OCI-LY7 (cell line): ENCODE measurements at regions of chr10 and their contacts with region 1.

Region 1: DNA sequence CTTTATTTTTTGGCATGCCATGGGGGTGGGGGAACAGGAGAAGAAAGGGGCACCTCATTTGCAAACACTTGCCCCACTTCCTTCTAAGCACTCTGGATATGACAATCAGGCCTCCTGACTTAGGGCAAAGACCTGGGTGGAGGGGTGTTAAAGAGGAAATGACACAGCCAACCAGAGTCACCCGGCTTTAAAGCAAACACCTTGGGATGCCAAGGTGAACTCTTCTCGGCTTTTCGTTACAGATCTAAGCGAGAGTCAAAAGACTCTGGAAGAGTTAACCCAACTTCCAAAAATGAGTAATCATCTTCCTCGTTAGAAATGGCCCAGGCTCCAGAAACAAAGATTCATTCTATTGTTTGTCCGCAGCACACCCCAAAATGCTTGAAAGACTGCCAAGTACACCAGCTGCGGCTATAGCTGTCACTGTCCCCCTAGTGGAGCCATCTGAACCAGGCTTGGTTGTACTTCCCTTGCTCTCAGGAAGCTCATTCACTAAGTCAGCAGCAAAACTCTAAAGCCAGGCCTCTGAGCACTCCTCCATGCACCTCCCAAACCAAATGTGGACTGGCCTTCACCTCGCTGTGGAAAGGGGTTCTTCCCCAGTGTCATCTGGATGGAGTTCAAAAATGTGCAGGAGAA is 24.8 kb downstream of the FAM53B start:
- DNase-seq: peak; percentile 81
- H3K4me3 ChIP-seq: peak overlapping the region; percentile 33
- H3K27ac ChIP-seq: peak overlapping the region; percentile 66
- H3K4me1 ChIP-seq: peaks cover 68% of the 10 kb centered on the region
- CTCF ChIP-seq: peak; percentile 79

Region 2: DNA sequence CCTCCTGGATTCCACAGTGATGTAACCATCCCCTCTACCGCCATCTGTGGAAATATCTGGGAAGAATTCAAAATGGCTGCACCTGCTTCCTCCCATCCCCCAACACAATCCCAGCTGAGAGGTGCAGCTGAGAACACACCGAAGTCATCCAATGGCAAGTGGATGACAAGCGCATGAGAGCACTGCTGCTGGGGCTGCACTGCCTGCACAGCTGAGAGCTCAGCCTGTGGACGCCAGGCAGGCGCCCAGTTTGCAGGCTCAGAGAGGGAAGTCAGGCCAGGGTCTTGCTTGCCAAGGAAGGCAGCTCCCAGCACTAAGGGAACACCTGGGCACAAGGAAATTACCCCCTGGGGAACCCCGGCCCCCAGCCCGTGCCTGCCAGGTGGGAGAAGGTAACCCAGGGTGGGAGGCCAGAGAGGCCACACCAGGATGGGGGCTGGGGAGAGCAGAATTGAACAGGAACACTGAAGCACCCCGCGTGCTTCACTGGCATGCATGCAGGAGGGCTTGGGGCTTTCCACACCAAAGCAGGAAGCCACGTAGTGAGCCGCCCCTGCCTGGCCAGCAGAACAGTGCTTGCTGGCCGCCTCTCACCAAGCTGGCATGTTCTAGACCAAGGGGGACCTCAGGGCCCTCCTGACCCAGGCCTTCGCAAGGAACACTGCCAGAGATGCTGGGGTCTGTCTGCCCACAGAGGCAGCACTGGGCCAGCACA is 21.3 kb before region 1 on chr10:
- CTCF ChIA-PET with region 1: interaction called, 3 read pairs
- POLR2A ChIA-PET with region 1: interaction called, 15 read pairs
- intact Hi-C with region 1: no loop called
- DNase-seq: no peak
- H3K4me3 ChIP-seq: no peak overlapping the region
- H3K27ac ChIP-seq: peak overlapping the region; percentile 74
- H3K4me1 ChIP-seq: peaks cover 61% of the 10 kb centered on the region
- CTCF ChIP-seq: no peak

Region 3: DNA sequence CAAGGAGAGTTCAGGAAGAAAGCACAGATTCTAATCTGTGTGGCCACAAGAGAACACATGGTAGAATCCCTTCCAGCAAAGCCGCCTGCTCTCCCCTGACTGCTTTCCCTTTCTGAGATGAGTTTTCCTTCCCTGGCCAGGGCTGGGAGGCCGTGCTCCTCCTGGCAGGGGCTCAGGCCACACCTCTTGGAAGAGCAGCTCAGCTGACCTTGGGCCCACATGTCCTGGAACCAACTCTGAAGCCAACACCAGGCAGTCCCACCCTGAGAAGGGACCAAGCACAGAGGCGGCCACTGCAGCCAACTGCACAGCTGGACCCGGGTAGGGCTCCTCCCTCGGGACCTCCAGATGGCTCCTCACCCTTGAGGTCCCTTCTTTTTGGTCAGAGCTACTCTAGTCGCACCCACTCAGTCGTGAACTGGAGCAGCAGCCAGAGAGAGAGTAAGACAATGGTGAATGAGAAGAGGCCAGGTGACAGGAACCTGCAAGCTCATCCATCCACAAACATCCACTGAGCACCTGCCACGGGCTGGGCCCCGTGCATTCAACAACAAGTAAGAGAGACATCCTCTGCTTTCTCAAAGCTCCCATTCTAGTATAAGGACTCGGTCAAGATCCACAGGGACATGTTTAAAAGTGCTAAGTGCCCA is 15.4 kb before region 1 on chr10:
- CTCF ChIA-PET with region 1: interaction called, 10 read pairs
- POLR2A ChIA-PET with region 1: interaction called, 50 read pairs
- intact Hi-C with region 1: loop called (anchors 1 kb)
- DNase-seq: peak; percentile 94
- H3K4me3 ChIP-seq: peak overlapping the region; percentile 14
- H3K27ac ChIP-seq: peak overlapping the region; percentile 88
- H3K4me1 ChIP-seq: peaks cover 84% of the 10 kb centered on the region
- CTCF ChIP-seq: no peak